Activated T-helper 1 cell treated with anti-CD3 and anti-CD28 coated beads, Interleukin-12 subunit alpha, Interleukin-12 subunit beta, Interleukin-2, Interleukin-4 antibody, amounts not matched to agents 30 ng/mL and 10 ng/mL and 1 ng/mL, durations not matched to agents 14 hours and 24 hours and 36 hours (primary cell): ENCODE measurements at regions of chr6 and their contacts with region 1.

Region 1: DNA sequence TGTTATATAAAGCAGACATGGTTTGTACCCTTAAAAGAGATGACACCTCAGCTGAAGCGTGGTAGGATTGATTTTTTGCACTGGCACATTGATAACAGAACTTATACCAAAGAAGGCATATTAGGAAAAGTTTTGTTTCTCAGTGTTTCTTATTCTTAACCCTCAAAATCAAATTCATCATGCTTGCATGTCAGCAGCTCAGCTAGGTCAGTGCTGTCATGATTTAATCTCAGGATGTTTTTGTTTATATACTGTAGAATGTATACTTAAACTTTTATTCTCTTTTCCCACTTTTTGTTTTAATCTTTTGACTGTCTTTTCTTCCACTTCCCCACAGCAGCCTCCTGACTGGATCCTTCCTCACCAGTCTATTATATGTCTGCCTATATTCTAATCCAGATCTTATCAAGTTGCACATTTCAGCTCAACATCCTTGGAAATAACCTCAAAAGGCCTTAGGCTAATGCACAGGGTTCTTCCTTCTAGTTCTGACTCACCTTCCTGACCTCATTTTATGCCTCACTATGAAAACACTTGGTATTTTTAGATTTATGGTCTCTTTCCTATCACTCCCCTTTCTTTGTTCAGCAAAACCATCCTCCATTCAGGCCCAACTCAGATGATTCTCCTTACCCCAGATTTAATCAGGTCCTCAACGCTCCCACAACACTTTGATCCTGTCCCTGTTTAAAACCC is 7.1 kb downstream of the HEBP2 start:
- DNase-seq: no peak
- H3K4me3 Mint-ChIP-seq: peak overlapping the region; percentile 25
- H3K27ac Mint-ChIP-seq: peak overlapping the region; percentile 83
- H3K4me1 Mint-ChIP-seq: peaks cover 29% of the 10 kb centered on the region
- H3K27me3 Mint-ChIP-seq: no peaks in the 10 kb centered on the region

Region 2: DNA sequence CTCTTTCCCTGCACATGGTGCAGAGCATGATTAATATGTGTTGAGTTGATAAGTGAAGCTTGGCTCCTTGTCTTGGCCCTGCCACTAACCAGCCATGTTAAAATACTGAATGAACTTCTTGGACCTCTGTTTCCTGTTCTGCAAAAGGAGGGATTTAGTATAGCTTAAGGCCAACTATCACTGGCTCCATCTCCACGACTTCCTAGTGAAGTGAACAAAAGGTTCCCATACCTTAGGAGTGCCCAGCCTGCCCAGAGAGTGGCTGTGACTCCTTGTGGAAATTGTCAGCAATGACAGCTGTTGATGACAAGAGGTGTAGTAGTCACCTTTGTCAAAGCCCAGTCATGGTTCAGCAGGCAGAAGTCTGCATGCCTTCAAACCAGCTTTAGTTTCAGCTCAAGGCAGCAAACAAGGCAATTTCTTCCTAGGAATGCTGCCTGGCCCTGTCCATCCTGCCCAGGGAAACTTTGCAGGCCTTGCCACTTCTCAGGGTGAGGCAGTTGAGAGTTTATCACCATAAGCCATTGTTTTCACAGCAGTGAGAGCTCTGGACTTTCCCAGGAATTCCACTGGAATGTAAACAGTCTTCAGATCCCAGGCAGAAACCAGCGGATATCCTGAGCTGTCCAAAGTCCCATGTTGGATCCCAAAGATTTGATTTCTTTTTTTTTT is 713.7 kb before region 1 on chr6:
- intact Hi-C with region 1: loop called (anchors 5 kb)
- DNase-seq: no peak
- H3K4me3 Mint-ChIP-seq: no peak overlapping the region
- H3K27ac Mint-ChIP-seq: no peak overlapping the region
- H3K4me1 Mint-ChIP-seq: peaks cover 62% of the 10 kb centered on the region
- H3K27me3 Mint-ChIP-seq: no peaks in the 10 kb centered on the region

Region 3: DNA sequence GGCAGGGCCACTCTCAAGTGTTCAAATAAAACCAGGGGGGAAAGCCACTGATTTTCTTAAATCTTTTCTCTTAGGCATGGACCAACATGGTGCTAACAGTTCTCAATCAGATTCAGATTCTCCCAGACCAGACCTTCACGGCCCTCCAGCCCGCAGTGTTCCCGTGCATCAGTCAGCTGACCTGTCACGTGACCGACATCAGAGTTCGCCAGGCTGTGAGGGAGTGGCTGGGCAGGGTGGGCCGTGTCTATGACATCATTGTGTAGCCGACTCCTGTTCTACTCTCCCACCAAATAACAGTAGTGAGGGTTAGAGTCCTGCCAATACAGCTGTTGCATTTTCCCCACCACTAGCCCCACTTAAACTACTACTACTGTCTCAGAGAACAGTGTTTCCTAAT is 74.9 kb before region 1 on chr6:
- intact Hi-C with region 1: no loop called
- DNase-seq: no peak
- H3K4me3 Mint-ChIP-seq: no peak overlapping the region
- H3K27ac Mint-ChIP-seq: no peak overlapping the region
- H3K4me1 Mint-ChIP-seq: no peaks in the 10 kb centered on the region
- H3K27me3 Mint-ChIP-seq: peaks cover 3% of the 10 kb centered on the region

Region 4: GRCh38 chr6:138455746-138456400 is 44.8 kb after region 1 on chr6:
- intact Hi-C with region 1: loop called (anchors 2 kb)
- DNase-seq: no peak
- H3K4me3 Mint-ChIP-seq: peak overlapping the region; percentile 38
- H3K27ac Mint-ChIP-seq: peak overlapping the region; percentile 27
- H3K4me1 Mint-ChIP-seq: peaks cover 22% of the 10 kb centered on the region
- H3K27me3 Mint-ChIP-seq: no peaks in the 10 kb centered on the region